Endothelial cell of umbilical vein (primary cell): ENCODE measurements at regions of chr16 and their contacts with region 1.

Region 1: GRCh38 chr16:50806099-50807062 is 64.5 kb downstream of the CYLD start:
- DNase-seq: peak; percentile 91
- H3K4me3 ChIP-seq: peak overlapping the region in 2 of 3 experiments; percentile 19 to 63
- H3K27ac ChIP-seq: no peak overlapping the region
- H3K4me1 ChIP-seq: no peaks in the 10 kb centered on the region
- H3K27me3 ChIP-seq: no peaks in the 10 kb centered on the region
- CTCF ChIP-seq: peak; percentile 76 to 85
- POLR2A ChIP-seq: no peak

Region 2: DNA sequence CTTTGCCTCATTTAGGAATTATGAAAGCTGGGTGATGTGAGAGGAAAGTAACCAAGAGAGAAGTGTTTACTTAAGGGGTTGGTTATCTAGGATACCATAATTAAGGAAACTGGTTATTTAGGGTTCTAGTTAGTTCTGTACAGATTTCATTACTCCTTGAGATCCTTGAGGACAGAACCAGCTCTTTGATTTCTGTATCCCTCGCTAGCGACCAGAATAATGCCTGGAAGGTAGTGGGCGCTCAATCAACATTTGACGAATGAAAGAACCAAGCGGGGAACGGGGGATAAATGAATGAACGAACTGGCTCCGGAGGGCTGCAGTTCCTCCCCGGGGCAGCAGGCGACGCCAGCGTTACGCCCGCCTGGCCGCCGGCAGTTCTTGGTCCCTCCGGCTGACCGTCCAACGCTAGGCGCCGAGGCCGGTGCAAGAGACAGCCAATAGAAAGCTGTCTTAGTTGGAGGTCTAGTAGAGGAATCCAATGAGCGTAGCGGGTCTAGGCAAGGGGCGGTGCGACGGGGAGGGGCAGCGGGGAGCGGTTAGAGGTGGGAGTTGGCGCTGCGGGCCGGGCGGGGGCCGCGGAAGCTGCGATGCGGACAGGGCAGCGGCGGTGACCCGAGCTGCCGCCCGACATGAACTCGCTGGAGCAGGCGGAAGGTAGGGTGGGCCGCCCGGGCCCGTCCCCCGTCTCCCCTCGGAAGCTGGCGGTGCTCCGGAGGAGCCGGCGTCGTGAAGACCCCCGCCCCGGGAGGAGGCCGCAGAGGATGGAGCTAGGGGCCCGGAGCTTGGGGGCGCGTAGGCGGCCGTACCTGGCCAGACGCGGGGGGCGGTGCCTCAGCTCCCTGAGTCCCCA is 781.5 kb before region 1 on chr16 and contains the start of gene CNEP1R1:
- CTCF ChIA-PET with region 1: interaction called, 39 read pairs
- POLR2A ChIA-PET with region 1: no interaction called
- dilution Hi-C with region 1: no loop called
- intact Hi-C with region 1: no loop called
- DNase-seq: peak; percentile 98
- H3K4me3 ChIP-seq: peak within 1 kb of the TSS; percentile 86 to 94 (median 93)
- H3K27ac ChIP-seq: peak within 1 kb of the TSS; percentile 8
- H3K4me1 ChIP-seq: peaks cover 13% of the 10 kb centered on the region
- H3K27me3 ChIP-seq: peaks cover 2 to 6% of the 10 kb centered on the region in 2 experiments
- CTCF ChIP-seq: peak; percentile 99 to 100
- POLR2A ChIP-seq: peak; percentile 63
- total RNA-seq, gene CNEP1R1: 21.7 and 23.2 TPM in 2 replicates

Region 3: GRCh38 chr16:50368410-50369132 is 437.8 kb before region 1 on chr16 and contains the start of gene BRD7:
- CTCF ChIA-PET with region 1: interaction called, 32 read pairs
- POLR2A ChIA-PET with region 1: no interaction called
- dilution Hi-C with region 1: no loop called
- intact Hi-C with region 1: loop called (anchors 2 kb)
- DNase-seq: peak; percentile 39
- H3K4me3 ChIP-seq: peak within 1 kb of the TSS; percentile 46 to 96 (median 87)
- H3K27ac ChIP-seq: peak within 1 kb of the TSS; percentile 63
- H3K4me1 ChIP-seq: peaks cover 8% of the 10 kb centered on the region
- H3K27me3 ChIP-seq: no peaks in the 10 kb centered on the region
- CTCF ChIP-seq: peak in 1 of 2 donors; percentile 48
- POLR2A ChIP-seq: no peak
- total RNA-seq, gene BRD7: 69.1 and 78.0 TPM in 2 replicates

Region 4: GRCh38 chr16:50593410-50594150 is 212.8 kb before region 1 on chr16:
- CTCF ChIA-PET with region 1: interaction called, 84 read pairs
- POLR2A ChIA-PET with region 1: no interaction called
- dilution Hi-C with region 1: no loop called
- intact Hi-C with region 1: loop called (anchors 1 kb)
- DNase-seq: peak; percentile 24
- H3K4me3 ChIP-seq: no peak overlapping the region
- H3K27ac ChIP-seq: no peak overlapping the region
- H3K4me1 ChIP-seq: no peaks in the 10 kb centered on the region
- H3K27me3 ChIP-seq: no peaks in the 10 kb centered on the region
- CTCF ChIP-seq: peak; percentile 16 to 37
- POLR2A ChIP-seq: no peak

Region 5: GRCh38 chr16:50671644-50672260 is 134.6 kb before region 1 on chr16:
- CTCF ChIA-PET with region 1: interaction called, 179 read pairs
- POLR2A ChIA-PET with region 1: no interaction called
- dilution Hi-C with region 1: no loop called
- intact Hi-C with region 1: loop called (anchors 1 kb)
- DNase-seq: peak; percentile 17
- H3K4me3 ChIP-seq: no peak overlapping the region
- H3K27ac ChIP-seq: no peak overlapping the region
- H3K4me1 ChIP-seq: no peaks in the 10 kb centered on the region
- H3K27me3 ChIP-seq: no peaks in the 10 kb centered on the region
- CTCF ChIP-seq: peak; percentile 48 to 51
- POLR2A ChIP-seq: no peak

Region 6: DNA sequence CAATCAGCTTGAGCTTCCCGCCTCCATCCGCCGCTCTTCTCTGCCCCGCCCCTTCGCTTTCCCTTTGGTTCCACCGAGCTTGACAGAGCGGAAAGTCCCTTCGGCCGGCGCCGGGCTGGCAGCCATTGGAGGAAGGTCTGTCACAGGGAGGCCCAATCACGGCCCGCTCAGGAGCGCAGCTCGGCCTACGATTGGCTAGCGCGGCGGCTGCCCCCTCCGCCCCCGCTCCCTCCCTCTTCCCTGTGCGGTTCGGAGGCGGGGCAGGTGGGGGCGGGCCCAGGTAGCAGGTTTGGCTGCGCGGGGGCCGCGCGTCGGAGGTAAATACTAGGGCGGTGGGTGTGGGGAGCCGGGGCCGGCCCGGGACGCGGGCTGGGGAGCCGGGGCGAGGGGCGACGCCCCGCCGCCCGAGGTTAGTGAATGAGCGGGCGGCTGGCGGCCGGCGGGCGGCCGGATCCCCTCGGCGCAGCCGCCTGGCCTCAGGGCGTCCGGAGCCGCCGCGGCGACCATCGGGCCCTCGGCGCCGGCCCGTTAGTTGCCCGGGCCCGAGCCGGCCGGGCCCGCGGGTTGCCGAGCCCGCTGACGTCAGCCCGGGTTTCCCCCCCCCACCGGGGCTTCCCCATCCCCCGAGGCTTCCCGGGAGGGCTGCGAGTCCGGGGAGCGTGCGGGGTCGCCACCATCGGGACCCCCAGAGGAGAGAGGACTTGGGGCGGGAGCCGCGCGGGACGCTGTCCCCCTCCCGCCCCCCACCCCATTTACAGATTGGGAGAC is 64.4 kb before region 1 on chr16 and contains the start of gene CYLD:
- CTCF ChIA-PET with region 1: interaction called, 24 read pairs
- POLR2A ChIA-PET with region 1: interaction called, 3 read pairs
- dilution Hi-C with region 1: no loop called
- intact Hi-C with region 1: loop called (anchors 1 kb)
- DNase-seq: peak; percentile 100
- H3K4me3 ChIP-seq: peak within 1 kb of the TSS; percentile 63 to 92 (median 79)
- H3K27ac ChIP-seq: peak within 1 kb of the TSS; percentile 62
- H3K4me1 ChIP-seq: peaks cover 11% of the 10 kb centered on the region
- H3K27me3 ChIP-seq: peaks cover 2 to 3% of the 10 kb centered on the region in 2 experiments
- CTCF ChIP-seq: no peak
- POLR2A ChIP-seq: no peak
- total RNA-seq, gene CYLD: 21.5 and 22.2 TPM in 2 replicates

Region 7: DNA sequence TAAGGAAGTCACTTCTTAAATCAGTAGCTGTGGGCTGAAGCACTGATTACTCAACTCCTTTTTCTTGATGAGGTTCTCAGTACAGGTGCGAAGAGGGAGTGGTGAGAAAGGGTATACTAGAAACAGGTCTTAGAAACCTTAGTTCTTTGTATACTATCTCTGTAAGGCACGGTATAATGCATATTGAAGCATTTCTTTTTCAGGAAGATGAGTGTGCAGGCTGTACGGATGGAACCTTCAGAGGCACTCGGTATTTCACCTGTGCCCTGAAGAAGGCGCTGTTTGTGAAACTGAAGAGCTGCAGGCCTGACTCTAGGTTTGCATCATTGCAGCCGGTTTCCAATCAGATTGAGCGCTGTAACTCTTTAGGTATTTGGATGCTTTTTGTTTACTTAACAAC is 25.3 kb before region 1 on chr16:
- CTCF ChIA-PET with region 1: interaction called, 37 read pairs
- POLR2A ChIA-PET with region 1: no interaction called
- dilution Hi-C with region 1: no loop called
- intact Hi-C with region 1: no loop called
- DNase-seq: no peak
- H3K4me3 ChIP-seq: no peak overlapping the region
- H3K27ac ChIP-seq: no peak overlapping the region
- H3K4me1 ChIP-seq: no peaks in the 10 kb centered on the region
- H3K27me3 ChIP-seq: no peaks in the 10 kb centered on the region
- CTCF ChIP-seq: no peak
- POLR2A ChIP-seq: no peak